ENCODE measurements at regions of chrX and their contacts with region 1.

Region 1: DNA sequence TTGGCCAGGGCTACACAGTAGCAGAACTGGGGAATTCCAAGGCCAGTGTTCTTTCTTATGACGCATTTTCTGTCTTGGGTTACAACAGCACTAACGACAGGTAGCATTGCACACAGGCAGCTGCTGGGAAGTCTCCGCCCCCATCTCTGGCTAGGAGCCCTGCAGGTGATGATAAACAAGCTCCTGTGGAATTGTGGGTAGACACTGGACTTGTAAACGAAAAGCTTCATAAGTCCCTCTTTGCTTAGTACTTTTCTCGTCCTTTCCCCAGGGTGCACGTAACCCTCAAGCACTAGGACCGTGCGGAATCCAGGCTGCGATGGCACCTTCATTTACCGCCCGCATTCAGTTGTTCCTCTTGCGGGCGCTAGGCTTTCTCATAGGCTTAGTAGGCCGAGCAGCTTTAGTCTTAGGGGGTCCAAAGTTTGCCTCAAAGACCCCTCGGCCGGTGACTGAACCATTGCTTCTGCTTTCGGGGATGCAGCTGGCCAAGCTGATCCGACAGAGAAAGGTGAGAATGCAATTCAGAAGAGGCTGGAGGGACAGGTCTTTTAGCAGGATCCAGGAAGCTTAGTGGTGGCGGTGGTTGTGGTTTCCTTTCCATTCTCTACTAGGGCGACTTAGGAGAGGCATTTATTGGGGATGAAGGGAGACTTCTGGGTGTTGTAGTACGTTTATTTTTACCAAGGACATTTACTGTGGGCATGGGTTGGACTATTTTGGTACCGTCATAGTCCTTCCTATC is at the start of gene FAAH2:
- DNase-seq: peak; percentile 79
- ATAC-seq: peak; percentile 81
- H3K4me3 Mint-ChIP-seq: peak within 1 kb of the TSS; percentile 88
- H3K27ac Mint-ChIP-seq: peak within 1 kb of the TSS; percentile 93
- H3K4me1 Mint-ChIP-seq: peaks cover 37% of the 10 kb centered on the region
- H3K27me3 Mint-ChIP-seq: no peaks in the 10 kb centered on the region
- total RNA-seq, gene FAAH2: 4.9 to 8.1 TPM

Region 2: DNA sequence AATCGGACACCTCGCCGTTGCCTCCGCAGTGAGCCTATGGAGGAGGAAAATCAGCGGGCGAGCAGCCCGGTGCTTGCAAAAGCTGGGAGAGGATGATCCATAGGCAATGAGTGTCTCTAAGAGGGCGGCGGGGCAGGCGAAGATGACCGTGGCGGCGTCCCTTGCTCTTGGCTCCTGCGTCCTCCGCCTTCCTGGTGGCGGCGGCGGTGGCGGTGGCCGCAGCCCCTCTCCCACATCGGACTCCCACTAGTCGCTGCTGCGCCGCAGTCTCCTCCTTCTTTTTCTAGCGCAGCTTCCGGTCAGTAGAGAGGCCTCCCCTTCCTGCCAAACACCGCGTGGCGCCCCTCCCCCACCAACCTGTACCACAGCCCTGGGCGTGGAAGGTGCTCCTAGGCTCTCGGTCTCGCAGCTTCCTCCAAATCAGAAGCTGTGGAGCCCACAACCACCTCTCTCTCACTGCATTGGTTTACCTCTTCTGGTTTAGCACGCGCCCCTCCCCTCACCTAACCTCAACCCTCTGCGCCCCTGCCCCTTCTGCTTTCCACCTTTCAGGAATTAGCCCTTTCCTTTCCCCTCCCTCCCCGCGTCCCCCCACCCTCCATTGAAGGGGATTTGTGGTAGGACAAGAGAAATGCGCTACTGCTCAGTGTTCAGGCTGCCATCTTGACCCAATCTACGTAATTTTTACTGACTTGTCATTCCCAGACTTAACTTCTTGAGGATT is 291.2 kb before region 1 on chrX and contains the start of gene SPIN3:
- CTCF ChIA-PET with region 1: no interaction called
- POLR2A ChIA-PET with region 1: no interaction called
- intact Hi-C with region 1: loop called in 1 of 2 experiments (anchors 5 kb)
- DNase-seq: peak; percentile 80
- ATAC-seq: peak; percentile 95
- H3K4me3 Mint-ChIP-seq: peak within 1 kb of the TSS; percentile 84
- H3K27ac Mint-ChIP-seq: peak within 1 kb of the TSS; percentile 92
- H3K4me1 Mint-ChIP-seq: peaks cover 30% of the 10 kb centered on the region
- H3K27me3 Mint-ChIP-seq: no peaks in the 10 kb centered on the region
- total RNA-seq, gene SPIN3: 7.7 to 10.0 TPM

Region 3: DNA sequence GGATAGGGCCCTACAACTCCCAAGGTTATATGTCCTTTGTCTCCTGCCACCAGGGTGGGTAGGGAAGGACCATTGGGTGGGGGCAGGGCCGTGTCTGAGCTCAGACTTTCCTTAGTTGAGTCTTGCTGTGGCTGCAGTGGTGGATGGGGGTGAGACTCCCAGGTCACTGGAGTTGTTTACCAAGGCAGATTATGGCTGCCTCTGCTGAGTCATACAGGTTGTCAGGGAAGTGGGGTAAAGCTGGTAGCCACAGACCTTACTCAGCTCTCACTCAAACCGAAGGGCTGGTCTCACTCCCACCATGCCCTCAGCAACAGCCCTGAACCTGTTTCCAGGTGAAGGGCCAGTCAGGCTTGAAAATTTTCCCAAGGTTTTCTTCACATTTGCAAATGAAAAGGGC is 59.0 kb before region 1 on chrX:
- CTCF ChIA-PET with region 1: no interaction called
- POLR2A ChIA-PET with region 1: no interaction called
- intact Hi-C with region 1: loop called in 1 of 2 experiments (anchors 10 kb)
- DNase-seq: peak; percentile 48
- ATAC-seq: peak; percentile 76
- H3K4me3 Mint-ChIP-seq: no peak overlapping the region
- H3K27ac Mint-ChIP-seq: no peak overlapping the region
- H3K4me1 Mint-ChIP-seq: no peaks in the 10 kb centered on the region
- H3K27me3 Mint-ChIP-seq: no peaks in the 10 kb centered on the region

Region 4: GRCh38 chrX:57453901-57454300 is 167.2 kb after region 1 on chrX:
- CTCF ChIA-PET with region 1: interaction called, 3 read pairs
- POLR2A ChIA-PET with region 1: no interaction called
- intact Hi-C with region 1: loop called (anchors 1 to 2 kb)
- DNase-seq: peak; percentile 39
- ATAC-seq: peak; percentile 65
- H3K4me3 Mint-ChIP-seq: no peak overlapping the region
- H3K27ac Mint-ChIP-seq: no peak overlapping the region
- H3K4me1 Mint-ChIP-seq: no peaks in the 10 kb centered on the region
- H3K27me3 Mint-ChIP-seq: no peaks in the 10 kb centered on the region

Region 5: DNA sequence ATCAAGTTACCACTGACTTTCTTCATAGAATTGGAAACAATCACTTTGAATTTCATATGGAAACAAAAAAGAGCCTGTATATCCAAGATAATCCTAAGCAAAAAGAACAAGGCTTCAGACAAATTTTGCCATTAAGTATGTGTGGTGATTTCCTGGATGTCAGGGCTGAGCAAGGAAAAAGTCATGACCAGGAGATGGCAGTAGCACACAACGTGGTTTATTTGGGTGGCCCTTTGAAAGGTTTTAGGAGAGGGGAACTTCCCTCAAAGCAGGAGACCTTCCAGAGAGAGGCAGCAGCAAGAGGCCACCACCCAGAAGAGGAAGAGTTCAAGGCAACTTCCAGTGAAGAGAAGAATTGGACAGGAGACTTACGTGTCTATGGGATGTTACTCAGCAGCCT is 287.1 kb after region 1 on chrX:
- CTCF ChIA-PET with region 1: no interaction called
- POLR2A ChIA-PET with region 1: no interaction called
- intact Hi-C with region 1: no loop called
- DNase-seq: peak; percentile 29
- ATAC-seq: peak; percentile 47
- H3K4me3 Mint-ChIP-seq: no peak overlapping the region
- H3K27ac Mint-ChIP-seq: no peak overlapping the region
- H3K4me1 Mint-ChIP-seq: peaks cover 2% of the 10 kb centered on the region
- H3K27me3 Mint-ChIP-seq: no peaks in the 10 kb centered on the region

Region 6: GRCh38 chrX:57595381-57595811 is 308.7 kb after region 1 on chrX:
- CTCF ChIA-PET with region 1: no interaction called
- POLR2A ChIA-PET with region 1: no interaction called
- intact Hi-C with region 1: loop called (anchors 5 kb)
- DNase-seq: no peak
- ATAC-seq: no peak
- H3K4me3 Mint-ChIP-seq: peak overlapping the region; percentile 69
- H3K27ac Mint-ChIP-seq: peak overlapping the region; percentile 80
- H3K4me1 Mint-ChIP-seq: peaks cover 34% of the 10 kb centered on the region
- H3K27me3 Mint-ChIP-seq: no peaks in the 10 kb centered on the region